Left lung (tissue), 14 donors: ENCODE measurements at regions of chr22 and their contacts with region 1.

Region 1: DNA sequence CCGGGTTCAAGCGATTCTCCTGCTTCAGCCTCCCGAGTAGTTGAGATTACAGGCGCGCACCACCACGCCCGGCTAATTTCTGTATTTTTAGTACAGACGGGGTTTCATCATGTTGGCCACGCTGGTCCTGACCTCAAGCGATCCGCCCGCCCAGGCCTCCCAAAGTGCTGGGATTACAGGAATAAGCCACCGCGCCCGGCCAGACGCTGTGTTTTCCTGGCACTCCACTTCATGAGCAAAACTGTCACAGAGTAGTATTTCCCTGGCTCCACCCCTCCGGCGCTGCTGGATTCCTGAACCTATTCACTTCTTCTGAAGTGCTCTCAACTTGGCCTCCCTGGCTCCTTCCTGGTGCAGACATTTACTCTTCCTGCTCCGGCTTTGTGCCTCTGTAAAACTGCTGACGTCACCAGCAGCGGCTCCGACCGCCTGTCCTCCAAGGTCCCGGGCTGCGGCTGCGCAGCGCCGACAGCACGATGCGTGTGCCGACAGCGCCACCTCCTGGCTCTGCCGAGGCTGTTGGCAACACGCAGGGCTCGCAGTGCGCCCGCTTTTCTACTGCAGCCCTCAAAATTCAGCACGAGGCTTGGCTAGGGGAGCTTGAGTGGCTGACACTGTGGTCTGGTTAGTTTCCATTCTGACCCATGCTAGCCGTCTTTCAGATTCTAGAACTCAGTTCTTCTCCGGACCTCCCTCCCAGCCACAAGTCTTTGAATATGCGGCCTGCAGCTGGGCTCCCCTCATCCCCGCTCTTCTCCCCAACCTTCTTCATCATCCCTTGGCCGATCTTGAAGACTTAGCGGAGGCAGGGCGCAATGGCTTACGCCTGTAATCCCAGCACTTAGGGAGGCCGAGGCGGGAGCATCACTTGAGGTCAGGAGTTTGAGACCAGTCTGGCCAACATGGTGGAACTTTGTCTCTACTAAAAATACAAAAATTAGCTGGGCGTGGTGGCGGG is 36.6 kb downstream of the APOL3 start:
- DNase-seq: peak; percentile 87 to 99 (median 98)
- ATAC-seq: peak; percentile 98
- H3K4me3 ChIP-seq: peak overlapping the region in 1 of 2 donors; percentile 4
- H3K27ac ChIP-seq: peak overlapping the region; percentile 77 to 86
- H3K4me1 ChIP-seq: peaks cover 0 to 12% of the 10 kb centered on the region in 2 donors
- H3K27me3 ChIP-seq: no peaks in the 10 kb centered on the region
- CTCF ChIP-seq: peak; percentile 91 to 98

Region 2: DNA sequence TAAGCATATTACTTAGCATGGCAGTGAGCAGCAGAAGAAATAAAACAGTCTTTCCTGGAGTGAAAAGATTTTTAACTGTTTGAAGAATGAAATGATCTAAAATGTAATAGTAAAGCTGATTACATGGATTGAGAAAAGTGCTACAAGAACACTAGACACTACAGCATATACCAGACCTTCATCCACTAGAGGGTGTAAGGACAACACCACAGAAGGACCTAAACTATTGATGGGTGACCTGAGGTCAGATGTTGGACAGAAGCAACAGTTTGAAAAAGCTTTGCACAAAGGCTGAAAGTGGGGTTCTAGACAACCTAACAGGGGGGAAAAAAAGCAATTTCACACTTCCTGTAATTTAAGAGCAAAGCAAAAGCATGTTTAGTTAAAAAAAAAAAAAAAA is 193.0 kb before region 1 on chr22:
- intact Hi-C with region 1: loop called in 1 of 2 experiments (anchors 10 kb)
- DNase-seq: peak in 2 of 4 donors; percentile 53 to 79
- ATAC-seq: peak; percentile 98
- H3K4me3 ChIP-seq: no peak overlapping the region
- H3K27ac ChIP-seq: no peak overlapping the region
- H3K4me1 ChIP-seq: no peaks in the 10 kb centered on the region
- H3K27me3 ChIP-seq: no peaks in the 10 kb centered on the region
- CTCF ChIP-seq: peak; percentile 44 to 51

Region 3: DNA sequence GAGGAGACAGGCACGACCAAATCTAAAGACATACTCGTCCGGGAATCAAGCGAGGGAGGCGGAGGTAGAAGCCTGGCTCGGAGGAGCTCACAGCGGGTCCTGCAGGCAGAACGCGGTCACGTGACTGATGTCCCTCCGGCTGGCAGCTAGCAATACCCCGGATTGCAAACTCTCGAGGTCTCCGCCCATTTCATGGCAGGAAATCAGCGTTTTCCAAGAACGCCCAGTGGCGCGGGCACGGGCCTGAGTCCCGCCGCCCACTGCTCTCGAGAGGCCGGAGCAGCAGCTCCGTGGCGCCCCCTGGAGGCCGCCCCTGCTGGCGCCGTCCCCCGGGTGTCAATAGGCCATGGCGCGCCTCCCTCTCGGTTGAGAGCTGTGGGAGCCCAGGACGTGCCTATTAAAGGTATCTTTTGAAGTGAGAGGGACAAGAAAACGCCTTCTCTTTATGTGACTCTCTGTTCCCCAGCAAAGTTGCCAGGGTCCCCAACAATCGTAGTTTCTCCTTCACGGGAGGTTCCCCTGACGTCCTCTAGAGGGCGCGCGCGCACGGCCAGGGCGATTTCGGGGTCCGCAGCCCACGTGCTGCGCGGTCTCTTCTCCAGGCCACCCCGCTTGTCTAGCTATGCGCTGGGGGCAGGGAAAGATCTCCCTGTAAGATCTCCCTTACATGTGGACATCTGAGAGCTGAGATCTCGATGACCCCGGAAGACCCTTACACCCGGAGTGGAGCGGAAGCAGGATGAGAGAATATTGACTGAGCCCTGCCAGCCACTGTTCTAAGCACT is 58.0 kb before region 1 on chr22:
- intact Hi-C with region 1: loop called in 1 of 2 experiments (anchors 10 kb)
- DNase-seq: peak; percentile 86 to 94 (median 92)
- ATAC-seq: peak; percentile 99
- H3K4me3 ChIP-seq: peak overlapping the region; percentile 25 to 40
- H3K27ac ChIP-seq: peak overlapping the region; percentile 80 to 87
- H3K4me1 ChIP-seq: peaks cover 0 to 10% of the 10 kb centered on the region in 2 donors
- H3K27me3 ChIP-seq: no peaks in the 10 kb centered on the region
- CTCF ChIP-seq: peak; percentile 97 to 100

Region 4: GRCh38 chr22:36180038-36180880 is 56.3 kb after region 1 on chr22:
- intact Hi-C with region 1: no loop called
- DNase-seq: peak; percentile 61 to 91 (median 80)
- ATAC-seq: peak; percentile 98
- H3K4me3 ChIP-seq: no peak overlapping the region
- H3K27ac ChIP-seq: no peak overlapping the region
- H3K4me1 ChIP-seq: peaks cover 0 to 9% of the 10 kb centered on the region in 2 donors
- H3K27me3 ChIP-seq: no peaks in the 10 kb centered on the region
- CTCF ChIP-seq: peak; percentile 92 to 93

Region 5: GRCh38 chr22:36311386-36312358 is 187.7 kb after region 1 on chr22:
- intact Hi-C with region 1: no loop called
- DNase-seq: no peak
- ATAC-seq: no peak
- H3K4me3 ChIP-seq: no peak overlapping the region
- H3K27ac ChIP-seq: no peak overlapping the region
- H3K4me1 ChIP-seq: peaks cover 0 to 3% of the 10 kb centered on the region in 2 donors
- H3K27me3 ChIP-seq: no peaks in the 10 kb centered on the region
- CTCF ChIP-seq: no peak

Region 6: DNA sequence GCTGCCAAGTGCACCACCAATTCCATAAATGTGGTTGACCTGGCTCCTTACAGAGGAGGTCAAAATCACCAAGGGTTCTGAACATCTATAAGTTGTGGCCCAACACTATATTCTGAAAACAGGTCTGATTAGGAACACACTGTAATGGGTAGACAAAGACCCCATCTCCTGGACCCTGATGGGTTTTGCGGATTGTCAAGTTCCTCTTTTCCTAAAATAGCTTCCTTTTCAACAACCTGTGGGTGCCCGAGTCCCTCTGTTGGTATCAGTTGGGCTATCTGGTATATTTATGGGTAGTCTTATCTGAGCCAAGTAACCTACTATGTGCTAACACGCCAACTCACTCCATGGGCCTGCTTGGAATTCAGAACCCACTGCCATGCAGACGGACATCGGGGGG is 589.5 kb after region 1 on chr22:
- intact Hi-C with region 1: no loop called
- DNase-seq: no peak
- ATAC-seq: no peak
- H3K4me3 ChIP-seq: no peak overlapping the region
- H3K27ac ChIP-seq: no peak overlapping the region
- H3K4me1 ChIP-seq: no peaks in the 10 kb centered on the region
- H3K27me3 ChIP-seq: peaks cover 0 to 53% of the 10 kb centered on the region in 2 donors
- CTCF ChIP-seq: no peak